Posterior cingulate gyrus (tissue), 11 donors: ENCODE measurements at regions of chrX and their contacts with region 1.

Region 1: GRCh38 chrX:70664726-70665125 is 220.1 kb downstream of the DLG3 start:
- DNase-seq: no peak

Region 2: GRCh38 chrX:70454441-70455365 is 210.0 kb before region 1 on chrX:
- intact Hi-C with region 1: loop called (anchors 10 kb)
- DNase-seq: peak in 7 of 10 donors; percentile 32 to 91 (median 54)

Region 3: DNA sequence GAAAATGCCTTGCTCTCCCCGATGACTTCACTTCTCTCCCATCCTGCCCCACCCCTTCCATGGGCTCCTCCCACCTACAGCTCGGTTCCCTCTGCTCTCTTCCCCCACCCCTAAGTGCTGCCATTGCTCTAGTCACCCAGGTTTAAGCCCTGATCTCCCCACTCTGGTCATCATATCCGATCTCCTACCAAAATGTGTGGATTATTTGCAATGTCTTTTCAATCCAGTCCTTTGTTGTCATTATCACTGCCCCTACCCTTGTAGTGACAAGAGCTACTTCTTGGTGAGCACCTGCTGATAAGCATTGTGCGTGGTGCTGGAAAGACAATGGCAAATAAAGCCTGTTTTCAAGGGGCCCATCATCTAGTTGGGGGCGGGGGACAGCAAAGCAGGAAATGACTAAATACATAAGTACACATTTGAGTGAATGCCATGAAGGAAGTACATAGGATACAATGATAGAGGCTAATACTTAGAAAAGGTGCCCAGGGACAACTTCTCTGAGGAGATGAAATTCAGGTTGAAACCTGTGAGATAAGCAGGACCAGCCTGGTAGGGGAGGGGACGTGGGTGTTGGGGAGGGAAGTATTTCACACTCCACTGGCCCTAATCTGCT is 156.3 kb before region 1 on chrX:
- intact Hi-C with region 1: no loop called
- DNase-seq: no peak